Heart left ventricle (tissue), 16 donors: ENCODE measurements at regions of chrX and their contacts with region 1.

Region 1: GRCh38 chrX:107804427-107804826 is 21.2 kb upstream of the MID2 start:
- DNase-seq: no peak
- ATAC-seq: no peak
- H3K4me3 ChIP-seq: no peak overlapping the region
- H3K27ac ChIP-seq: no peak overlapping the region
- H3K4me1 ChIP-seq: no peaks in the 10 kb centered on the region
- H3K27me3 ChIP-seq: peaks cover 0 to 12% (median 0%) of the 10 kb centered on the region in 9 donors
- CTCF ChIP-seq: no peak
- POLR2A ChIP-seq: no peak

Region 2: DNA sequence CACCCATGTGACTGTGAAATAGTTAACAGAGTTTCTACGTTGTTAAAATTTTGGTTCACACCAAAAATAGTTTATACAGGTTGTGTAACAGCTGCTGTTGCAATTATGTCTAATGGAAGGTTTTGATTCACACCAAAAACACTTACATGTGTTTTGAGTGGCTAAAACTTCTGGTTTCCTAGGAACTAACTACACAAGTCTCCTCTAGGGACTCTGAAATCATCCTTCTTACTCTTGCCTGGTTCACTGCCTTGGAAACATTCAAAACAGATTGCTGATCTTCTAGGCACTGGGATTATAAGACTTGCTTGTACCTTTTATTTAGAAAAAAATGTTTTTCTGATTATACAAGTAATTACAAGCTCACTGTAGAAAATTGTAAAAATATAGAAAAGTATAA is 789.5 kb before region 1 on chrX:
- intact Hi-C with region 1: loop called in 1 of 10 experiments (anchors 10 kb)
- DNase-seq: no peak
- ATAC-seq: peak in 2 of 4 donors; percentile 32 to 41
- H3K4me3 ChIP-seq: no peak overlapping the region
- H3K27ac ChIP-seq: no peak overlapping the region
- H3K4me1 ChIP-seq: no peaks in the 10 kb centered on the region
- H3K27me3 ChIP-seq: peaks cover 0 to 9% (median 0%) of the 10 kb centered on the region in 9 donors
- CTCF ChIP-seq: no peak
- POLR2A ChIP-seq: no peak

Region 3: GRCh38 chrX:107050195-107050709 is 754.2 kb before region 1 on chrX:
- intact Hi-C with region 1: no loop called
- DNase-seq: no peak
- ATAC-seq: no peak
- H3K4me3 ChIP-seq: no peak overlapping the region
- H3K27ac ChIP-seq: no peak overlapping the region
- H3K4me1 ChIP-seq: no peaks in the 10 kb centered on the region
- H3K27me3 ChIP-seq: peaks cover 0 to 28% (median 0%) of the 10 kb centered on the region in 9 donors
- CTCF ChIP-seq: no peak
- POLR2A ChIP-seq: no peak